SK-N-SH (cell line): ENCODE measurements at regions of chr3 and their contacts with region 1.

Region 1: GRCh38 chr3:123660900-123661299 is 76.0 kb upstream of the HACD2 start:
- DNase-seq: peak; percentile 75
- H3K4me3 ChIP-seq: no peak overlapping the region
- H3K27ac ChIP-seq: peak overlapping the region; percentile 73 to 80
- H3K4me1 ChIP-seq: peaks cover 33 to 38% of the 10 kb centered on the region in 2 experiments
- H3K27me3 ChIP-seq: no peaks in the 10 kb centered on the region
- CTCF ChIP-seq: no peak
- EP300 ChIP-seq: peak; percentile 57 to 90; a peak in 3 of 4 replicates
- RAD21 ChIP-seq: no peak; the same call in 1 of the 2 replicates

Region 2: DNA sequence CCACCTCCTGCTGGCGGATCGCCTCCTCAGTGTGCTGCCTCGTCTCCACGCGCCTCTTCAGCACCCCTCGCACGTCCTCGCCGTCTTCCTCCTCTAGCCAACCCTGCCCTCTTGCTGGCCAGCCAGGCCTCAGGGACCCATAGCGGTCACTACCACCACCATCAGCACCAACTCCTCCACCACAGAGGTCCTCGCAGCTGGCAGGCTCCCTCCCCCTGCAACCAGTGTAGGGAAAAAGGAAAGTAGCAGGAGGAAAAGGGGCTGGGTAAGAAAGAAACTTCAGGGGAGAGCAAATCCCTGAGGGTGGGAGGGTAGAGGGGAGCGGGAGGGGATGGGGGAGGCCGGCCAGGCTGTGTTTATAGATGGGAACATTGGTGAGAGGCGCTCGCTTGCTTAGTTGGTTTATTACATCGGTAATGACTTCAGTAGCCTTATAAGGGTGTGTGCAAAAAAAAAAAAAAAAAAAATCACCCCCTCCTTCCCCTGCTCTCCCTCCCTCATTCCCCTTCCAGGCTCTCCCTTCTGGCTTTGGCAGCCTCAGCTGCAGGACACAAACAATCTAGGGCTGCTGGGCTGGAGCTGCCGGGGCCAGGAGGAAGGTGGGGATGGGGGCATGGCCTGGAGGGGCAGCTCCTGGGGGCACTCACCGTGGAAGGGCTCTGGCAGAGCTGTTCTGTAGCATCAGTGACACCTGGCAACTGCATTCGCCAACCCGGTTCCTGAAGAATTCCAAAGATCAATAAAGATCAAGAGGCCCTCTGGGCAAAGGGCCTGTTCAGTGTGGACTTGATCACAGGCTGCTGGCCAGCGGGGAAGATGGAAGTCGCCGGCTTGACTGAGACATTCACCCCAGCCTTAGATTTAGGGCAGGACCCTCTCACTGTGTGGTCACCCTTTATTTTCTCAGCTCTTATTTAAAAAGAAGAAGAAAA is 40.2 kb after region 1 on chr3:
- CTCF ChIA-PET with region 1: interaction called, 10 read pairs
- POLR2A ChIA-PET with region 1: no interaction called
- DNase-seq: no peak
- H3K4me3 ChIP-seq: no peak overlapping the region
- H3K27ac ChIP-seq: no peak overlapping the region
- H3K4me1 ChIP-seq: peaks cover 8 to 19% of the 10 kb centered on the region in 2 experiments; a peak in 2 of 4 replicates
- H3K27me3 ChIP-seq: no peaks in the 10 kb centered on the region
- CTCF ChIP-seq: no peak
- EP300 ChIP-seq: no peak
- RAD21 ChIP-seq: no peak

Region 3: GRCh38 chr3:123893012-123893411 is 232.1 kb after region 1 on chr3:
- CTCF ChIA-PET with region 1: no interaction called
- POLR2A ChIA-PET with region 1: no interaction called
- DNase-seq: no peak
- H3K4me3 ChIP-seq: no peak overlapping the region
- H3K27ac ChIP-seq: no peak overlapping the region
- H3K4me1 ChIP-seq: no peaks in the 10 kb centered on the region
- H3K27me3 ChIP-seq: no peaks in the 10 kb centered on the region
- CTCF ChIP-seq: no peak
- EP300 ChIP-seq: no peak
- RAD21 ChIP-seq: no peak